Breast epithelium (tissue), 4 donors: ENCODE measurements at regions of chr5 and their contacts with region 1.

Region 1: GRCh38 chr5:25387953-25388352 is 743.2 kb upstream of the CDH10 start:
- DNase-seq: no peak
- H3K4me3 ChIP-seq: no peak overlapping the region
- H3K27ac ChIP-seq: no peak overlapping the region
- H3K4me1 ChIP-seq: no peaks in the 10 kb centered on the region
- H3K27me3 ChIP-seq: no peaks in the 10 kb centered on the region
- CTCF ChIP-seq: no peak
- POLR2A ChIP-seq: no peak

Region 2: GRCh38 chr5:25418319-25418859 is 30.4 kb after region 1 on chr5:
- intact Hi-C with region 1: loop called (anchors 2 kb)
- DNase-seq: no peak
- H3K4me3 ChIP-seq: no peak overlapping the region
- H3K27ac ChIP-seq: no peak overlapping the region
- H3K4me1 ChIP-seq: no peaks in the 10 kb centered on the region
- H3K27me3 ChIP-seq: no peaks in the 10 kb centered on the region
- CTCF ChIP-seq: no peak
- POLR2A ChIP-seq: no peak